HEK293 (cell line): ENCODE measurements at regions of chr11 and their contacts with region 1.

Region 1: DNA sequence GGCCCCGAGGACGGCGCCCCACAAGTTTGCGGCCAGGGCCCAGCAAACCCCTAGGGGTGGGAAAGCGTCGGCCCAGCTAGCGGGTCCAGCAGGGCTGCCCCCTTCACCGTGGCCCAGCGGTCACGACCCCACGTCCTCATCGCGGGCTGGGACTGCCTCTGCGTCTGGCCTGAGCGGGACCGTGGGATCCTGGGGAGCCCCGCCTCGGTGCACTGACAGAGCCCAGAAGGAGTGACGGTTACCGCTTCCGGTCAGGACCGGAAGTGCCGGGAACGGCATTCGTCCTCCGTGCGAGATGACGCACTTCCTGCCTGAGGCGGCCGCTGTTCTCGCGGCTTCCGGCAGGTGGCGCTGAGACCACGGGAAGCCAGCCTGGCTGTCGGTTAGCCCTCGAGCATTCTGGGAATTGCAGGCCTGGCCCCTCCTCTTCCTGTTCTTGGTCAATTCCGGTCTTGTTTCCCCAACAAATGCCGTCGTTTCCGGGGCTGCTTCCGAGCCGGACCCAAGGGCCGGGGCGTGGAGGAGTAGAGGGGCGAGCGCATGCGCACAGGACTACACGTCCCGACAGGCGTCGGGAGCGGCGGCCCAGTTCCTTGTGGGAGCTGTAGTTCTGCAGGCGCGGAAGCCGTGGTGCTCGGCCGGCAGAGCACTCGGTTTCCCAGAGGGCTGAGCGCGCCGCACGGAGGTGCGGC is at the start of gene TSSC4:
- H3K4me3 ChIP-seq: peak within 1 kb of the TSS; percentile 99
- H3K27ac ChIP-seq: peak within 1 kb of the TSS; percentile 53
- H3K4me1 ChIP-seq: no peaks in the 10 kb centered on the region
- CTCF ChIP-seq: peak; percentile 97

Region 2: GRCh38 chr11:2109541-2110019 is 290.6 kb before region 1 on chr11:
- CTCF ChIA-PET with region 1: no interaction called
- POLR2A ChIA-PET with region 1: no interaction called
- H3K4me3 ChIP-seq: no peak overlapping the region
- H3K27ac ChIP-seq: no peak overlapping the region
- H3K4me1 ChIP-seq: no peaks in the 10 kb centered on the region
- CTCF ChIP-seq: no peak

Region 3: GRCh38 chr11:2256923-2257716 is 143.1 kb before region 1 on chr11:
- CTCF ChIA-PET with region 1: no interaction called
- POLR2A ChIA-PET with region 1: no interaction called
- H3K4me3 ChIP-seq: no peak overlapping the region
- H3K27ac ChIP-seq: no peak overlapping the region
- H3K4me1 ChIP-seq: no peaks in the 10 kb centered on the region
- CTCF ChIP-seq: no peak

Region 4: GRCh38 chr11:2305140-2305840 is 94.9 kb before region 1 on chr11:
- CTCF ChIA-PET with region 1: interaction called, 27 read pairs
- POLR2A ChIA-PET with region 1: interaction called, 4 read pairs
- H3K4me3 ChIP-seq: no peak overlapping the region
- H3K27ac ChIP-seq: no peak overlapping the region
- H3K4me1 ChIP-seq: no peaks in the 10 kb centered on the region
- CTCF ChIP-seq: peak; percentile 82

Region 5: DNA sequence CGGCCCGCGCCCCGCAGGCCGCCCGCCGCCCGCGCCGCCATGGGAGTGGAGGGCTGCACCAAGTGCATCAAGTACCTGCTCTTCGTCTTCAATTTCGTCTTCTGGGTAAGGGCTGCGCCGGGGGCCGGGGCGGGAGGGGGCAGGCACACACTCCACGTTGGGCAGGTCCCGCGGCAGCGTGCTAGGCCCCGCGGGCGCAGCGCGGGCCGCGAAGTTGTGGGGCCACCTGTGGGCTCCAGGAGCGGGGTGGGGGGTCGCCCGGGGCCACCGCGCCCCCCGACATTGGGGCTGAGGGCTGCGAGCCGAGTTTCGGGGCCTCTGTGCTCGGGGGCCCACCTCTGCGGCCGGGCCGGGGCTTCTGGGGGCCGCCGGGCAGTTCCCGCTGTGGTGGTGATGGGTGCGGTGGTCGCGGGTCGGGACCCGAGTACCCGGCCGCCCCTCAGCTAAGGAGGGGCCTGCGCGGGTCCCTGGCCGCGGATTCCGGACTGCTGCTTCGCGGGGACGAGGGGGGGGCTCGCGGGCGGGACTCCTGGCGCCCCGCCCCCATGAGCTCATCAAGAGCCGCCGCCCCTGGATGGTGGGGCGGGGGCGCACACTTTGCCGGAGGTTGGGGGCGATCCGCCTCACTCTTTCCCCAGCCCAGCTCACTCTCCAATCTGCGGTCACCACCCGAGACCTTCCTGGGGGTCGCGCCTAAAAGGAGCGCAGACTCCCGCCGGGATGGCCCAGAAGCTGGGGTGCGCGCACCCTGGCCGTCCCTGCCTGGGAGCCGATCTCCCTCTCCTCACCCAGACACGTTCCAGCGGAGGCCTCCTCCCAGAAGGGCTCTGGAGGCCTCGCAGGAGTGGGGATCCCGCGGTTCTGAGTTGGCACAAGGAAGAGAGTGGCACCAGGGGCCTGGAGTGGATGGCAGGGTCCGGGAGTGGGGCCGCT is 22.4 kb before region 1 on chr11:
- CTCF ChIA-PET with region 1: interaction called, 3 read pairs
- POLR2A ChIA-PET with region 1: interaction called, 64 read pairs
- H3K4me3 ChIP-seq: peak overlapping the region; percentile 86
- H3K27ac ChIP-seq: peak overlapping the region; percentile 83; the same call in 1 of the 2 replicates
- H3K4me1 ChIP-seq: no peaks in the 10 kb centered on the region
- CTCF ChIP-seq: no peak

Region 6: DNA sequence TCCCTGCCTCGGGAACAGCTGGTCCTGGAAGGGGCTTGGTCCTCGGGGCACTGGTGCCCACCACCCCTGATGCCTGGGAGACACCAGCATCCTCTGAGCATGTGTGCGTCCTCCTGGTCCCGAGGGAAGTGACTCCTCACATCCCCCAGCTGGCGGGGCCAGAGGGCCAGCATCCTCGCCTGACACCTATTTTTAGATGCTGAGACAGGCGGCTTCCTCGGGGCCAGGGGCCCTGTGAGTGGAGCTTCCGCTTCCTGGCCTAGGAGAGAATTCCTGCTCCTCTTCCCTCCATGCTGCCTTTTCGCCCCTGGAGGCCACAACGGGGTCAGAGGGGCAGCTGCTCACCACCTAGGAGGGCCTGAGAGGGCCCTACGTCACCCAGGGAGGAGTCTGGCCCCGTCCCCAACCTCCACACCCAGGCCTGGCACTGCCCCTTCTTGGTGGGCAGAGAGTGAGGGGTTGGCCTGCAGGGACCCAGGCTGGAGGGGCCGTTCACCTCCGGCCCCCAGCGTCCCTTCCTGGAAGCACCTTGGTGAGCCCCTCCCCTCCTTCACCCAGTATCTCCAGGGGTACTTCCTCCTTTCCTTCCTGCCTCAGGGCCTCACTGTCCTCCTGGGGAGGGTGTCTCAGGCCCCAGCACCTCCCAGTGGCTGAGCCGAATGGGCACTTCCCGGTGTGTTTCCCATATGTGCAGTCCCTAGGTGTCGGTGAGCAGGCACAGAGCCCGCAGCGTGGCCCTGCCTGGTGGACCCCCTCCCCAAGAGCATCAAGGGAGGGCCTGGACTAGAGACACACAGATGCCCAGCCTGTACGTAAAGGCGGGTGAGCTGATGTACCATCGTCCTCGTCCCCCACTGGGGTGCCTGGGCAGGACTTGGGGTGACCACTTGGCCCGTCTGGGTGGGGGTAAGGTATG is 17.0 kb before region 1 on chr11:
- CTCF ChIA-PET with region 1: interaction called, 5 read pairs
- POLR2A ChIA-PET with region 1: interaction called, 64 read pairs
- H3K4me3 ChIP-seq: no peak overlapping the region
- H3K27ac ChIP-seq: no peak overlapping the region
- H3K4me1 ChIP-seq: no peaks in the 10 kb centered on the region
- CTCF ChIP-seq: no peak